OCI-LY7 (cell line): ENCODE measurements at regions of chr6 and their contacts with region 1.

Region 1: GRCh38 chr6:14660806-14661579 is 543.4 kb downstream of the CD83 start:
- DNase-seq: peak; percentile 79
- H3K4me3 ChIP-seq: peak overlapping the region; percentile 48
- H3K27ac ChIP-seq: peak overlapping the region; percentile 59
- H3K4me1 ChIP-seq: peaks cover 93% of the 10 kb centered on the region
- CTCF ChIP-seq: no peak

Region 2: GRCh38 chr6:14601490-14601889 is 59.5 kb before region 1 on chr6:
- CTCF ChIA-PET with region 1: no interaction called
- POLR2A ChIA-PET with region 1: no interaction called
- intact Hi-C with region 1: no loop called
- DNase-seq: no peak
- H3K4me3 ChIP-seq: no peak overlapping the region
- H3K27ac ChIP-seq: no peak overlapping the region
- H3K4me1 ChIP-seq: peaks cover 9% of the 10 kb centered on the region
- CTCF ChIP-seq: no peak

Region 3: GRCh38 chr6:14910692-14911547 is 249.9 kb after region 1 on chr6:
- CTCF ChIA-PET with region 1: no interaction called
- POLR2A ChIA-PET with region 1: no interaction called
- intact Hi-C with region 1: loop called (anchors 5 kb)
- DNase-seq: peak; percentile 85
- H3K4me3 ChIP-seq: peak overlapping the region; percentile 46
- H3K27ac ChIP-seq: peak overlapping the region; percentile 27
- H3K4me1 ChIP-seq: peaks cover 26% of the 10 kb centered on the region
- CTCF ChIP-seq: no peak

Region 4: DNA sequence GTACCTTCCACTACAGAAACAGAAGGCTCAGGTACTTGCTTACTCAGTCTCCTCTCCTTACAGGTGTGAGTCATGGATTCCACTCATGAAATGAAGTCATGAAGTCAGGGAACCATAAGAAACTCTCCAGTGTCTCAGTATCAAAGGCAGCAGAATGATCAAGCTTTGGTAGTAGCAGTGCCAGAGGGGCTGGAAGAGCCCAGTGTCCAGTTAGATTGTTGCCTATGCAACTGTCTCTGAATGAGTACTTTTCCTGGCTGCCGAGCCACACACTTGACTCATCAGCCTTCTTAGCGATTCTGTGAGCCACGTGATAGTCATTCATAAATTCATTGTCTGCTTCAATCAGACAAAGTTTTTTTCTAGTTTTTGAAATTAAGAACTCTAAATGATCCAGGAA is 1054.1 kb after region 1 on chr6:
- CTCF ChIA-PET with region 1: no interaction called
- POLR2A ChIA-PET with region 1: no interaction called
- intact Hi-C with region 1: no loop called
- DNase-seq: no peak
- H3K4me3 ChIP-seq: no peak overlapping the region
- H3K27ac ChIP-seq: no peak overlapping the region
- H3K4me1 ChIP-seq: no peaks in the 10 kb centered on the region
- CTCF ChIP-seq: no peak